ENCODE measurements at regions of chr6 and their contacts with region 1.

Region 1: GRCh38 chr6:33014841-33015634 is 5.6 kb upstream of the HLA-DOA start:
- DNase-seq: peak; percentile 75
- ATAC-seq: peak; percentile 81
- H3K4me3 ChIP-seq: no peak overlapping the region
- H3K27ac ChIP-seq: no peak overlapping the region
- H3K4me1 ChIP-seq: peaks cover 20% of the 10 kb centered on the region
- H3K27me3 ChIP-seq: no peaks in the 10 kb centered on the region
- CTCF ChIP-seq: peak; percentile 57 to 80 (median 68); a peak in 5 of 6 replicates
- EP300 ChIP-seq: no peak
- POLR2A ChIP-seq: no peak
- RAD21 ChIP-seq: peak; percentile 94

Region 2: GRCh38 chr6:33040157-33040556 is 25.1 kb after region 1 on chr6:
- CTCF ChIA-PET with region 1: interaction called, 3 read pairs
- POLR2A ChIA-PET with region 1: interaction called, 3 read pairs
- RAD21 ChIA-PET with region 1: interaction called, 5 read pairs
- SMC1A ChIA-PET with region 1: interaction called, 11 read pairs
- in situ Hi-C with region 1: no loop called
- intact Hi-C with region 1: no loop called
- DNase-seq: peak; percentile 41
- ATAC-seq: peak; percentile 91
- H3K4me3 ChIP-seq: no peak overlapping the region
- H3K27ac ChIP-seq: no peak overlapping the region
- H3K4me1 ChIP-seq: peaks cover 7% of the 10 kb centered on the region; the same call in 1 of the 2 replicates
- H3K27me3 ChIP-seq: no peaks in the 10 kb centered on the region
- CTCF ChIP-seq: no peak
- EP300 ChIP-seq: no peak
- POLR2A ChIP-seq: no peak
- RAD21 ChIP-seq: no peak

Region 3: GRCh38 chr6:33075568-33076405 is 60.7 kb after region 1 on chr6 and contains the start of gene HLA-DPB1:
- CTCF ChIA-PET with region 1: interaction called, 281 read pairs
- POLR2A ChIA-PET with region 1: interaction called, 240 read pairs
- RAD21 ChIA-PET with region 1: interaction called, 139 read pairs
- SMC1A ChIA-PET with region 1: interaction called, 177 read pairs
- in situ Hi-C with region 1: loop called (anchors 5 kb)
- intact Hi-C with region 1: loop called (anchors 2 kb)
- DNase-seq: peak; percentile 96
- ATAC-seq: peak; percentile 81
- H3K4me3 ChIP-seq: peak within 1 kb of the TSS; percentile 82
- H3K27ac ChIP-seq: peak within 1 kb of the TSS; percentile 99
- H3K4me1 ChIP-seq: peaks cover 22% of the 10 kb centered on the region
- H3K27me3 ChIP-seq: no peaks in the 10 kb centered on the region
- CTCF ChIP-seq: no peak
- EP300 ChIP-seq: no peak
- POLR2A ChIP-seq: peak; percentile 89
- RAD21 ChIP-seq: no peak
- polyA plus RNA-seq, gene HLA-DPB1: 101 to 177 TPM

Region 4: DNA sequence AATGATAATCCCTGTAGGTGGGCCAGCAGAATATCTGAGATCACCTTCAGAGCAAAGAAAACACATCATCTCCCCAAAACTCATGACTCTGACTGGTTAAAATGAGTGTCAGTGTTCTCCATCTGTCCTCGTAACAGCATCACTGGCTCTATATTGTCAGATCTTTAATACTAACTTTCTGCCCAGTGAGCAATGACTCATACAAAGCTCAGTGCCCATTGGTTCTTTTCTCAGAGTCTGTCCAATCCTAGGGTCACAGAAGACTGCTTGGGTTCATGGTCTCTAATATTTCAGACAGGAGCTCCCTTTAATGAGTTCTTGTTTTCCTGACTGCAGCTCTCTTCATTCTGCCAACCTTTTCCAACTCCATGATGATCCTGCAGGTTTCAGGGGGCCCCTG is 97.1 kb after region 1 on chr6:
- CTCF ChIA-PET with region 1: interaction called, 88 read pairs
- POLR2A ChIA-PET with region 1: interaction called, 7 read pairs
- RAD21 ChIA-PET with region 1: interaction called, 15 read pairs
- SMC1A ChIA-PET with region 1: interaction called, 139 read pairs
- in situ Hi-C with region 1: no loop called
- intact Hi-C with region 1: no loop called
- DNase-seq: peak; percentile 68
- ATAC-seq: peak; percentile 97
- H3K4me3 ChIP-seq: no peak overlapping the region
- H3K27ac ChIP-seq: peak overlapping the region; percentile 41
- H3K4me1 ChIP-seq: peaks cover 40% of the 10 kb centered on the region
- H3K27me3 ChIP-seq: no peaks in the 10 kb centered on the region; a peak in 2 of 4 replicates
- CTCF ChIP-seq: no peak
- EP300 ChIP-seq: no peak
- POLR2A ChIP-seq: no peak
- RAD21 ChIP-seq: no peak

Region 5: GRCh38 chr6:33147807-33148666 is 133.0 kb after region 1 on chr6:
- CTCF ChIA-PET with region 1: interaction called, 16 read pairs
- POLR2A ChIA-PET with region 1: interaction called, 3 read pairs
- RAD21 ChIA-PET with region 1: interaction called, 20 read pairs
- SMC1A ChIA-PET with region 1: interaction called, 78 read pairs
- in situ Hi-C with region 1: no loop called
- intact Hi-C with region 1: no loop called
- DNase-seq: no peak
- ATAC-seq: no peak
- H3K4me3 ChIP-seq: no peak overlapping the region
- H3K27ac ChIP-seq: no peak overlapping the region
- H3K4me1 ChIP-seq: peaks cover 3% of the 10 kb centered on the region; the same call in 1 of the 2 replicates
- H3K27me3 ChIP-seq: peaks cover 0 to 2% of the 10 kb centered on the region in 2 experiments; a peak in 2 of 4 replicates
- CTCF ChIP-seq: peak; percentile 69 to 82 (median 81)
- EP300 ChIP-seq: no peak
- POLR2A ChIP-seq: no peak
- RAD21 ChIP-seq: peak; percentile 93

Measured in GM12878 (cell line).